MCF 10A (cell line): ENCODE measurements at regions of chr4 and their contacts with region 1.

Region 1: DNA sequence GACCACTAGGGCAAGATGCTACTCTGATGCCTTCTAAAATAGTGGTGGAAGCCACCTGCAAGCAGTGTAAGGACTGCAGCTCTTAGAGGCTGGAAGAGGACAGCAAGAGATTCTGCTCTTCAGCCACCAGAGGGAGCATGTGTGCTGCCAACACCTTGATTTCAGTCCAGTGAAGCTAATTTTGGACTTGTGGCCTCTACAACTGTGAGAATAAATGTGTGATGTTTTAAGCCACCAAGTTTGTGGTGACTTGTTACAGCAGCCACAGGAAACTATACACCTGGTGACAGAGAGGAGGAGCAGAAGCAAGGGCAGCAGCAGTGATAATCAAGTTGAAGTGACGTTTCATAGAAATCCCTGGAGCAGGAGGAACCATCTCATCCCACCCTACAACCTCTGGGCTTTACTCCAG is 55.9 kb downstream of the FGFBP1 start:
- DNase-seq: peak; percentile 90
- H3K4me3 Mint-ChIP-seq: no peak overlapping the region
- H3K27ac Mint-ChIP-seq: peak overlapping the region; percentile 35
- H3K4me1 Mint-ChIP-seq: peaks cover 5% of the 10 kb centered on the region
- H3K27me3 Mint-ChIP-seq: no peaks in the 10 kb centered on the region
- CTCF ChIP-seq: peak; percentile 88

Region 2: DNA sequence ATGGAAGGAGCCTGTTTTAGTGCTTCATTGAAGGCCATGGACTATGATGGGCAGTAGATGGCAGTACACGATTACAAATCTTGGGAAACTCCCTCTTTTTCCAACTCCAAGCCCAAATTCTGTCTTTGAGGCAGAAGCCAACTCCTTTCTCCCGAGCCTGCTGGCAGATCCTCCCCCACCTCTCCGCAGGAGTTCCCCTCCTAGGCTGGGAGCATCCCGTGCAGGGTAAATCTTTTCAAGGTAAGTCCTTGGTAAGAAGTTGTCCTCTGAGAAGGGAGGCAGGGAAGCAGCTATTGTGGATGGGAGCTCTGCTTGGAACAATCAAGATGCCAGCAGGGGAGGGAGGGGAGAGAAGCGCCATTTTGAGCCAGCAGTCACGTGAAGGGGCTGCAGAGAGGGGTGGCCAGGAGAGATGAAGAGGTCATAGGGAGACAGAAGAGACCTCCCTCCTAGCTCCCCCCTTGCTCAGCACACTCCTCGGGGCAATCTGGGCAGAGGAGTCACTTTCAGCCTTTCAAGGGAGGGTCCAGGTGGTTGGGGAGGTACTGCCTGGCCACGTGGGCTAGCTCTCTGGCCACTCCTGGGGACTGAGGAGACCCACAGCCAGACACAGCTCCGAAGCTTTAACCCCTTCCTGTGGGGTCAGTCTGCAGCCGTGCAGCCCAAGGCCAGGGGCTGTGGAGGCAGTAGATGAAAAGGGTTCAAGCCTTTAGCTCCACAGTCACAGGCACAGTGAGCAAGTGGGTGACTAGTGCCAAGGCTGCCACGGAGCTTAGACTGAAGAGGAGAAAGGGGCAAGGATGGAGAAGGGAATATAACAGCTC is 403.4 kb before region 1 on chr4:
- CTCF ChIA-PET with region 1: interaction called, 12 read pairs
- POLR2A ChIA-PET with region 1: no interaction called
- intact Hi-C with region 1: loop called (anchors 2 kb)
- DNase-seq: peak; percentile 87
- H3K4me3 Mint-ChIP-seq: peak overlapping the region; percentile 76
- H3K27ac Mint-ChIP-seq: peak overlapping the region; percentile 59
- H3K4me1 Mint-ChIP-seq: peaks cover 13% of the 10 kb centered on the region
- H3K27me3 Mint-ChIP-seq: no peaks in the 10 kb centered on the region
- CTCF ChIP-seq: peak; percentile 63

Region 3: GRCh38 chr4:15868806-15869410 is 13.8 kb before region 1 on chr4:
- CTCF ChIA-PET with region 1: interaction called, 21 read pairs
- POLR2A ChIA-PET with region 1: no interaction called
- intact Hi-C with region 1: no loop called
- DNase-seq: no peak
- H3K4me3 Mint-ChIP-seq: no peak overlapping the region
- H3K27ac Mint-ChIP-seq: no peak overlapping the region
- H3K4me1 Mint-ChIP-seq: no peaks in the 10 kb centered on the region
- H3K27me3 Mint-ChIP-seq: no peaks in the 10 kb centered on the region
- CTCF ChIP-seq: no peak

Region 4: GRCh38 chr4:15920723-15921591 is 38.3 kb after region 1 on chr4:
- CTCF ChIA-PET with region 1: interaction called, 11 read pairs
- POLR2A ChIA-PET with region 1: no interaction called
- intact Hi-C with region 1: loop called (anchors 1 kb)
- DNase-seq: peak; percentile 97
- H3K4me3 Mint-ChIP-seq: no peak overlapping the region
- H3K27ac Mint-ChIP-seq: peak overlapping the region; percentile 36
- H3K4me1 Mint-ChIP-seq: peaks cover 40% of the 10 kb centered on the region
- H3K27me3 Mint-ChIP-seq: no peaks in the 10 kb centered on the region
- CTCF ChIP-seq: no peak

Region 5: GRCh38 chr4:15944895-15945294 is 62.2 kb after region 1 on chr4:
- CTCF ChIA-PET with region 1: interaction called, 357 read pairs
- POLR2A ChIA-PET with region 1: no interaction called
- intact Hi-C with region 1: no loop called
- DNase-seq: no peak
- H3K4me3 Mint-ChIP-seq: no peak overlapping the region
- H3K27ac Mint-ChIP-seq: no peak overlapping the region
- H3K4me1 Mint-ChIP-seq: peaks cover 20% of the 10 kb centered on the region
- H3K27me3 Mint-ChIP-seq: no peaks in the 10 kb centered on the region
- CTCF ChIP-seq: no peak

Region 6: DNA sequence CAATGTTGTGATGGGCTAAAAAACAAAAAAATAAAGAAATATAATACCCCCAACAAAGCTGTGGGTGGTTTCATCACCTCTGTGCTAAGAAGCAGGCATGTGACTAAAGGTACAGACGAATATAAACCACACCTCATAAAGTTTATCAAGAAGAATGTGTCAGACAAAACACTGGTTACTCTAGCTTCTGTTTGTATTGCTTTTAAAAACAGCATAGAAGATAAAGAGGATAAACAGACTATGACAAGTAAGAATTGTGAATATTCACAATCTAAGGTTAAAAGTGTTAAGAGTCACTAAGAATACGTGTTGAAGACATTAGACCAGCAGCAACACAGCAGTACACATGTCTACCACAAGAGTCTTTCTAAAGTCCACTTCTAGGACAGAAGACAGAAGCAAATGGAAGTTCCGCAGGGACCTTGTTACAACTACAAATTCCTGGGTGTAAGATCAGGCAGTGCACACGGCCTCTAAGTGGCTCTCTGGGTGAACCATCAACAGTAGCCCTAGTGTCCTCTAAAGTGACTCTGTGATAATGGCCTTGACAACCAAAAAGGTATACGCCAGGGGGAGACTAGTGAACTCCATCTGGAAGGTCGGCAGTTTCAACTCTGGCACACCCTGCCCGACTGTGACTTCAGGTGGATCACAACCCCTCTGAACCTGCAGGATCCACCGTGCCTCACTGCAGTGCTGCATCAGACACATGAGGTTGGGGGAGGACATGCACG is 88.6 kb after region 1 on chr4:
- CTCF ChIA-PET with region 1: interaction called, 40 read pairs
- POLR2A ChIA-PET with region 1: no interaction called
- intact Hi-C with region 1: no loop called
- DNase-seq: no peak
- H3K4me3 Mint-ChIP-seq: no peak overlapping the region
- H3K27ac Mint-ChIP-seq: no peak overlapping the region
- H3K4me1 Mint-ChIP-seq: no peaks in the 10 kb centered on the region
- H3K27me3 Mint-ChIP-seq: peaks cover 12% of the 10 kb centered on the region
- CTCF ChIP-seq: no peak

Region 7: DNA sequence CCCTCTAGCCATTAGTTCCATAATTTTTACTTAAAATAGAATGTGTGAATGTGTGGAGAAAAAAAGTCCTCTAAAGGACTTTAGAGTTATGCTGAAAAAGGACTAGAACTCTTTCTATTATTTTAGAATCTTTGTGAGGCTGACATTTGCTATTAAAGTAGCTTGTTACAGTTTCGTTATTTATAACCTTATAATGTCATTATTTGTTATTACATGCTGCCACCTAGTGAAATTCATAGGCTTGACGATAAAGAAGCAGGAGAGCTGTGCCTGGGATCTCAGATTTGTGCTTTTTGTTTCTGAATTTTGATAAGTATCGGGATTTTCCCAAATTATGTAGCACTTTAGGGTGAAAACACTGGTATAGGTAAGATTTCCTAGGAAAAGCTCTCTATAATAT is 382.1 kb after region 1 on chr4:
- CTCF ChIA-PET with region 1: no interaction called
- POLR2A ChIA-PET with region 1: no interaction called
- intact Hi-C with region 1: loop called (anchors 10 kb)
- DNase-seq: peak; percentile 51
- H3K4me3 Mint-ChIP-seq: no peak overlapping the region
- H3K27ac Mint-ChIP-seq: no peak overlapping the region
- H3K4me1 Mint-ChIP-seq: no peaks in the 10 kb centered on the region
- H3K27me3 Mint-ChIP-seq: no peaks in the 10 kb centered on the region
- CTCF ChIP-seq: peak; percentile 37